ENCODE measurements at regions of chr20 and their contacts with region 1.

Region 1: DNA sequence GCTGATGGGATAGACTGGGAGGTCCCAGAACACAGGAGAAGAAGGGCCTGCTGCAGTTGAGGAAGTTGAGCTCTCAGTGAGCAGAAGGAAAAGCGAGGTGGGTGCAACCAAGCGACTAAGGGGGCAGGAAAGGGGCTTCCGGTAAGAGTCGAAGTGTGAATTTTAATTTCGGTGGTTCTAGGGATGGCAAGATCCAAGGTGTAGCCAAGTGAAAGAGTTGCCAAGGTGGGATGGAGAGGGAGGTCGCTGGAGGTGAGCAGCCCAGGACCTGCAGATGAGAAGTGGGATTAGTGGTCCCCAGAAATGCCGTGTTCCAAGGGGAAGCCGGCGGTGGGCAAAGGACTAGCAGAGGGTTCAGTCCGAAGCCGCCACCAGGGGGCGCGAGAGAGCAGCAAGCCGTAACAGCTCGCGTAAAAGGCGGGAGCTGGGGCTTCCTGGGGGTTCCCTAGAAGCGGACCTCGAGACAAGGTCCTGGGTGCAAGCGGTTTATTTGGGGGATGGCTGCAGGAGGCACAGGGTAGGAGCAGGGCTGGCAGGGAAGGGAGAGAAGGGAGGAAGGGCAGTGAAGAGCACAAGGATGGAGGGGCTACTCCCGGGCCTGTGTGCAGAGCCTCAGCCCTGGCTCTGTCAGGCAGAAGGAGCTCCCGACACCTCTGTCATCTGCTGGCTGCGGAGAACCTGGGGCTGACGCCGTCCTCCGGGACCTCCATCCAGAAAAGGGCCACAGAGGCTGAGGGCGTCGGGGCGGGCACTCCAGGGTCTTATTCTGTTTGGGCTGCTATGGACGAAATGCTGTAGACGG is 103.6 kb downstream of the PAX1 start:
- DNase-seq: peak; percentile 72
- CTCF ChIP-seq: peak; percentile 71

Region 2: DNA sequence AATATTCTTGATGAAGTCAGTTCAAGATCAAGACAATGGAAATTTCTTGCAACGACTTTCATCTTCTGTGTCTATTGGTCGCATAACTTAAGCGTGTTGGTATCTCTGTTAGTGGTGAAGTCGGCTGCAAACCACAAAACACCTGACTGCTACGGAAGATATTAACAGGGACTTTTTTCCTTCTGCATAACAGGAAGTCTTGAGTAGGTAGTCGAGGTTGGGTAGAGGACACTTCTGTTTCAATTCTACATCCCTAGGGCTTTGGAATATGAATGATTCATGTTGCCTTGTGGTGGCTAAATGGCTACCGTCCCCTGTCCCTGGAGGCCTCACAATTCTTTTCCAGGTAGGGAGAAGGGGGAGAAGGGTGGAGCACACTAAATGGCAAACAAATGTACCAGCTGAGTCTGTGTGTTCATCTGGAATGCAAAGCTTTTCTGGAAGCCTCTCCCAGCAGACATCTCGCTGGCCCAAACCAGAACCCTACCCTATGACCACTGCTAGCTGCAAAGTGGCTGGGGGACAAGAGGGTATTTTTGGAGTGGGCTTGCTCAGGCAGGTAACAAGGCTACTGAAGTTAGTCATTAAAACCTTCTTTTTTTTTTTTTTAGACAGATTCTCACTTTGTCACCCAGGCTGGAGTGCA is 260.6 kb before region 1 on chr20:
- CTCF ChIA-PET with region 1: no interaction called
- POLR2A ChIA-PET with region 1: no interaction called
- DNase-seq: peak; percentile 59
- CTCF ChIP-seq: no peak

Region 3: DNA sequence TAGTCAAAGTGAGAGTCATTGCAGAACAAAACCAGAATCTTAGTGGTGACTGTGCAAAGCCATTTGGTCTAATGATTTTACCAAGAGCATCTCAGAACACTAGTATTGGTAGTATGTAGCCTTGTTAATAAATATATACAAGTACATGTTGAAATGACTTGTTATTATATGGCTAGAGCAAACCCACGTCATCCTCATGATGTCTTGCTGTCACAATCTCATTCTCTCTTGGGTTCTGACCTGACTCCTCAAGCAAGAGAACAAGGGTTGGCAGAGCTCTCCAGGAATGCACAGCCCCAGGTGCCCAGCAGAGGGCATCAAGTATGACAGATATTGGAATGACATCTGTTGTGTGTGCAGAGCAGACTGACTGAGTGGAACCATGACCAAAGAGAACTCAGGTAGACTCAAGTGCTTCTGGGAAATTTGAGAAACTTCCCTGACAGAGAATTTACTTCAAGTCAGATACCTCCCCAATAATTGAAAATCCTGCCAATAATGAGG is 13.1 kb before region 1 on chr20:
- CTCF ChIA-PET with region 1: interaction called, 12 read pairs
- POLR2A ChIA-PET with region 1: no interaction called
- DNase-seq: no peak
- CTCF ChIP-seq: no peak

Region 4: GRCh38 chr20:21840991-21841390 is 31.9 kb after region 1 on chr20:
- CTCF ChIA-PET with region 1: no interaction called
- POLR2A ChIA-PET with region 1: no interaction called
- DNase-seq: no peak
- CTCF ChIP-seq: no peak

Region 5: GRCh38 chr20:22027423-22027822 is 218.4 kb after region 1 on chr20:
- CTCF ChIA-PET with region 1: no interaction called
- POLR2A ChIA-PET with region 1: no interaction called
- DNase-seq: no peak
- CTCF ChIP-seq: no peak